Esophagus squamous epithelium (tissue), 5 donors: ENCODE measurements at regions of chr7 and their contacts with region 1.

Region 1: DNA sequence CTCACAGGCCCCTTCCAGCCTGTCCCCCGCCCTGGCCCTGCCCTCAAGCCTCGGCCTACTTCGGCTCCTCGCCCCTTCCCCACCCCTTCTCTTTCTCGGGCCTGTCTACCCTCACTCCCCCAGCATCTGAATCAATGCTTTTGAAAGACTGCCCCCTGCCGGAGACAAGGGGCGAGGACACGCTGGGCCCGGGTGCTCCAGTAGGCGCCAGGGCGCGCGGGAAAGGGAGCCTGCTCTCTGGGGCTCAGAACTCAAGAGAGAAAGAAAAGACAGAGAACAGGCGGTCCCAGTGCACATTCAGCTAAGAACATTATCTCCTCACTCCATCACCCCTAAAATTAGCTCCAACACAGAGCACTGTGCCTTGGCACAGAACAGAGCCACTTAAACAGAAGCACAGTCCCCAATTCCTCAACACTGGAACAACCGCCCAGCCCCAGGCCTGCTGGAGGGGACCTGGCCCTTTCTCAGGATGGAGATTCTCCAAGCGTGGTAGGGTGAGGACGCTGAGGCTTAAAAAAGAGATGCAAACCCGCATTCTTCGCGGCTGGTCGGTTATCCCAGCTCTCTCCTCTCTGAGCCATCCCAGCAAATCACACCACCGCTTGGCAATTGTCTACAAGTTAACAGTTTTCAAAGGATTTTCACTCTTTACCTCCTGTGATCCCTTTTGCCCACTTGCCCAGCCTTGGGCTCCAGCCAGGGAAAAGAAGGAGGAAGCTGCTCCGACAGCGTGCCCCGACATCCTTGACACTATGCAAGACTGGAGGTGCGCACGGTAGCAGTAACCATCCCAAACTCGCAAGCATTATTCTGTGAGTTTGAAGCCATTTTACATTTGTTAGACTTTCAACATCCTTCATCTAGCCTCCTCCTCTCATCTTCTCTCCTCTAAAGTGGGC is 2.1 kb downstream of the GIGYF1 start:
- DNase-seq: no peak
- H3K4me3 ChIP-seq: peak overlapping the region in 3 of 4 donors; percentile 71 to 99 (median 99)
- H3K27ac ChIP-seq: peak overlapping the region in 3 of 4 donors; percentile 26 to 72 (median 46)
- H3K4me1 ChIP-seq: peaks cover 21 to 65% (median 49%) of the 10 kb centered on the region in 3 donors
- H3K27me3 ChIP-seq: no peaks in the 10 kb centered on the region
- CTCF ChIP-seq: peak; percentile 83 to 94 (median 92)
- POLR2A ChIP-seq: no peak

Region 2: GRCh38 chr7:100478966-100479665 is 212.8 kb before region 1 on chr7 and contains the start of gene TSC22D4:
- intact Hi-C with region 1: loop called (anchors 10 kb)
- DNase-seq: peak; percentile 72
- H3K4me3 ChIP-seq: peak within 1 kb of the TSS; percentile 85 to 100 (median 92)
- H3K27ac ChIP-seq: peak within 1 kb of the TSS; percentile 92 to 98 (median 94)
- H3K4me1 ChIP-seq: peaks cover 38 to 67% (median 43%) of the 10 kb centered on the region in 3 donors
- H3K27me3 ChIP-seq: no peaks in the 10 kb centered on the region
- CTCF ChIP-seq: no peak
- POLR2A ChIP-seq: peak in 3 of 4 donors; percentile 83 to 93 (median 91)
- total RNA-seq, gene TSC22D4: 29.2 to 65.0 (median 33.7) TPM

Region 3: GRCh38 chr7:100563809-100564400 is 128.0 kb before region 1 on chr7:
- intact Hi-C with region 1: loop called (anchors 5 kb)
- DNase-seq: no peak
- H3K4me3 ChIP-seq: no peak overlapping the region
- H3K27ac ChIP-seq: no peak overlapping the region
- H3K4me1 ChIP-seq: peaks cover 9 to 55% (median 9%) of the 10 kb centered on the region in 3 donors
- H3K27me3 ChIP-seq: no peaks in the 10 kb centered on the region
- CTCF ChIP-seq: peak; percentile 88 to 98 (median 96)
- POLR2A ChIP-seq: no peak

Region 4: DNA sequence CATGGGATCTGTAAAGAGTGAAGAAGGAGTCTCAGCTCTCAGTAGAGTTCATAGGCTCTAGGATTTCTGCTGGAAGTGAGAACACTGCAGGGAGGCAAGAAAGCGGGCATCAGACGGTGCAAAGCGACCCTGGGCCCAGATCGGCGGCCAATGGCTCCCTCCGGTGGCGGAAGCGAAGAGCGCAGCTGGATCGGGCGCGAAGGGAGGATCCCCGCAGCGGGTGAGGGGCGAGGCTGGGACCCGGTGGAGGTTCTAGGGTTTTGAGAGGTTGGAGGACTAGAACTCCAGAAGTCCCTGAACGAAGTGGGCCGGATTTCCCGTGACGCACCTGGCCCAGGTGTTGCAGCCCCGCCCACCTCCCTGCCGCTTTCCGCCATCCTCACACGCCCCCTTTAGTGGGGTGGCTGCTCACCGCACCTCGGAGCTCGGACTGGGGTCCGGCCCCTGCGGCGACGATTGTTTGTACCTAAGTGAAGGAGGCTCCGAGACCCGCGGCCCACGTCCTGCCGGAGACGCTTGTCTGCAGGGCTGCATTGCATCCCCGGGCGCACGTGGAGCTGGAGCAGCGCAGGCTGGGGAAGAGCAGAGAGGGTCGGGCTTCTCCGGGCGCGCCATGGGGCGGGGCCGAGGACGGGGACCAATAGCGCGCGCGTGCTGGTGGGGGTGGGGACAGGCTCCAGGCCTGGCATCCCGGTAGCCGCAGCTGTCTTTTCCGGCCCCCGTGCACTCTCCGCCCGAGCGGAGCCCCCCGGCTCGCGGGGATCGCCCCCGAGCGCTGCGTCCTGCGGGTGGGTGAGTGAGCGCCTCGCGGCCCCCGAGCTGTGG is 160.3 kb after region 1 on chr7 and contains the start of gene SLC12A9:
- intact Hi-C with region 1: loop called (anchors 5 kb)
- DNase-seq: peak; percentile 52
- H3K4me3 ChIP-seq: peak within 1 kb of the TSS; percentile 62 to 91 (median 80)
- H3K27ac ChIP-seq: peak within 1 kb of the TSS; percentile 70 to 87 (median 80)
- H3K4me1 ChIP-seq: peaks cover 17 to 34% (median 18%) of the 10 kb centered on the region in 3 donors
- H3K27me3 ChIP-seq: no peaks in the 10 kb centered on the region
- CTCF ChIP-seq: peak; percentile 88 to 95 (median 92)
- POLR2A ChIP-seq: peak in 2 of 4 donors; percentile 31 to 60
- total RNA-seq, gene SLC12A9: 9.9 to 19.6 (median 17.3) TPM